ENCODE measurements at regions of chr20 and their contacts with region 1.

Region 1: DNA sequence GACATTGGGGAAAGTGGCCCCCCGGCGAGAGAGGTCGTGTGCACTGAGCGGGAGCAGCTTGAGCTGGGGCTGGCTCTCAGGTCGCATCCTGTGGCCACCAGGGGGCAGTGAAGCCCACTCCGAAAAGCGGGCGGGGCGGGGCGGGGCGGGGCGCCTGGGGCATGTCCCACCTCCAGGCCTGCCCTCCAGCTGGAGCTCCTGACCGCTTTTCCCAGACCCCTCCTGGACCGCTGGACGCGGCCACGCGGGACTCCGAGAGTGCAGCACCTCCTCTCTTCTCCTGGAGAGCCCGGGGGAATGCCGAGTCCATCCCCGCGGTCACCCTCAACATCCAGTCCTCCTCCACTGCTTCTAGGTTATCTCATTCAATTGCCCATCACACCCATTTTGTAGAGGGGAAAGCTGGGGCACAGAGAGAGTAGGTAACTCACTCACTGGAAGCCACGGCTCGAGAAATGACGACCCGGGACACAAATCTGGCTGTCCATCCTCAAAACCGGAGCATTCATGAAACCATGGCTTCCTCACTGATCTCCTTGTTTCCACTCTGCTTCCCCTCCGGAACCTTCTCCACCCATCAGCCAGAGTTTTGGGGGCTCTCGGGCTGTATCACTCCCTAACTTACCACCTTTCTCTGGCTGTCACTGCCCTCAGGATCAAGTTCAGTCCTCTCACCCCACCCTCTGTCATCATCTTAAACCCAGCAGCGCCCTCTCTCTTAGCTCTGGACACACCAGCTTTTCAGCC is 24.1 kb downstream of the COX4I2 start:
- DNase-seq: peak; percentile 89
- ATAC-seq: peak; percentile 75
- H3K4me3 Mint-ChIP-seq: peak overlapping the region; percentile 45
- H3K27ac Mint-ChIP-seq: peak overlapping the region; percentile 89
- H3K4me1 Mint-ChIP-seq: peaks cover 49% of the 10 kb centered on the region
- H3K27me3 Mint-ChIP-seq: no peaks in the 10 kb centered on the region

Region 2: DNA sequence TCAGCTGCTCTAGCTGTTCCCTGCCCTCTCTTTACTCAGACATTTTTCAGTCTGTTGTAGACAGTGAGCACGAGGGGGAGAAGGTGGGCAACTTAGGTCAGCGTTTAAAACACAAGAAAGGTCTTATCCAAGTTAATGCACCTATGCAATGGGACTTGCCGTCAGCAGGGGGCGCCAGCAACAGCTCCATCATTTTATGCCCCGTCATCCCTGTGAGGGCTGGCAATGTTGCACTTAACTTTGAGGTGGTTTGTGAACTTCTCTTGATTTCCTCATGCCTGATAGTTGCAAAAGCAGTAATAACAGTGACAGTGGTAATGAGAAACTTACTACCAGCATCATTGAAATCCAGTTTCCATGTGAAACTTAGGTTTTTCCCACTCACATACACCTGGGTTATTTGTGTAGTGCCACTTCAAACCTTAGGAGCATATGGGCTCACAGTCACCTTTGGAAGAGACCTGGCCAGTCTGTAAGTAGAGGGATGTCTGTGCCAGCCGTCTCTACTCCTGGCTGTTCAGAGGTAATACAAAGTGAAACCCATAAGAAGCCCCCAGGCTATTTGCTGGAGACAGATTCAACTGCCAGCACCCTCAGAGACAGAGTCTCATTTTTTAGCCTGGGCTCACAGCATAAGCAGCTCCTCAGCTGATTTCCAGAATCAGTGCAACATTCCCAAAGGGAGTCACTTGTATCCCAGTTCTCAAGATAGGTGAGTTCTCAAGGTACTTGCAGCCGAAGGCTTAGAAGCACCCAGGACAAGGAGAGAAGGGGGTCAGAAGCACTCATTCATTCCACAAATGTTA is 101.5 kb before region 1 on chr20:
- CTCF ChIA-PET with region 1: interaction called, 10 read pairs
- POLR2A ChIA-PET with region 1: no interaction called
- intact Hi-C with region 1: no loop called
- DNase-seq: peak; percentile 91
- ATAC-seq: peak; percentile 78
- H3K4me3 Mint-ChIP-seq: no peak overlapping the region
- H3K27ac Mint-ChIP-seq: peak overlapping the region; percentile 85
- H3K4me1 Mint-ChIP-seq: peaks cover 16% of the 10 kb centered on the region
- H3K27me3 Mint-ChIP-seq: no peaks in the 10 kb centered on the region

Region 3: GRCh38 chr20:31630187-31630790 is 31.5 kb before region 1 on chr20:
- CTCF ChIA-PET with region 1: interaction called, 10 read pairs
- POLR2A ChIA-PET with region 1: no interaction called
- intact Hi-C with region 1: loop called in 1 of 2 experiments (anchors 2 kb)
- DNase-seq: no peak
- ATAC-seq: peak; percentile 49
- H3K4me3 Mint-ChIP-seq: no peak overlapping the region
- H3K27ac Mint-ChIP-seq: no peak overlapping the region
- H3K4me1 Mint-ChIP-seq: no peaks in the 10 kb centered on the region
- H3K27me3 Mint-ChIP-seq: no peaks in the 10 kb centered on the region

Region 4: DNA sequence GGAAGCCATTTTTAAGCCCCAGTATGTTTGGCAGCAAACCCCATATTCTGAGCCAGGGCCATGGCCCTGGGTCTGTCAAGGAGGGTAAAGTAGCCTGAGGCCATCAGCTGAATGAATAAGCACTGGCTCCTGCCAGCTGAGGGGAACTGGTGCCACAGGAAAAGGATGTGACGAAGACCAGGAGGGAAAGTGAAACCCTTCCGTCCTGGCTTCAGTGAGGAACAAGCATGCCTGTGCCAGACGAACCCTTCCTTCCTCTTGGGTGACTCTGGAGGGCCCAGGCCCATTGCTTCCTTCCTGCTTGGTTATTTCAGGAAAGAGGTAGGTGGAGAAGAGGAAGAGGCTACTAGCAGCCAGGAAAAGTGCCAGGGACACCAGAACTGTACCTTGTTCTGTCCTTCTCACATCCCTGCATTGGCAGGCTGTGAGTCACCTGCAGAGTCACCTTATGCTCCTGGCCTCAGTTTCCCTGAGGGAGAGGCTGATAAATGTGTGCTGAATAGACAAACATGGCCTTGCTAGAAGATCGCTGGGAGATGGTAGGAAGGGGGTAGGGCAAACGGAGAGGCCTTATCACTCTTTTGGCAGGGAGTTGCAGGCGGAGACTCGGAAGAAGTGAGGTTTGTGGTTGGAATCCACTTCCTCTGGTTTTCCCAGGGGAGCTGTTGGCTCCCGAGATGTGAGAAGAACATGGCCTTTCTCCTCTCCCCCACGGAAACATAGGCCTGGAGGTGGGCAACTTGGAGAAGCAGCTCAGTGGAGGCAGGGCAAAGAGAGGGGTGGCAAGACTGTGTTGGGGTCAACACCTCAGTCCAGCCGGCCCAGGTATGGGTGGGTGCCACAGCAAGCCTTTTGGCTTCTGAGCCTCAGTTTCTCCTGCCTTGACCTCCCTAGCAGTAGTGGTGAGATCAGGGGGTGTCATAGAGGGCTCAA is 13.4 kb after region 1 on chr20:
- CTCF ChIA-PET with region 1: interaction called, 34 read pairs
- POLR2A ChIA-PET with region 1: interaction called, 7 read pairs
- intact Hi-C with region 1: no loop called
- DNase-seq: peak; percentile 81
- ATAC-seq: peak; percentile 72
- H3K4me3 Mint-ChIP-seq: peak overlapping the region; percentile 91
- H3K27ac Mint-ChIP-seq: peak overlapping the region; percentile 100
- H3K4me1 Mint-ChIP-seq: peaks cover 79% of the 10 kb centered on the region
- H3K27me3 Mint-ChIP-seq: no peaks in the 10 kb centered on the region

Region 5: DNA sequence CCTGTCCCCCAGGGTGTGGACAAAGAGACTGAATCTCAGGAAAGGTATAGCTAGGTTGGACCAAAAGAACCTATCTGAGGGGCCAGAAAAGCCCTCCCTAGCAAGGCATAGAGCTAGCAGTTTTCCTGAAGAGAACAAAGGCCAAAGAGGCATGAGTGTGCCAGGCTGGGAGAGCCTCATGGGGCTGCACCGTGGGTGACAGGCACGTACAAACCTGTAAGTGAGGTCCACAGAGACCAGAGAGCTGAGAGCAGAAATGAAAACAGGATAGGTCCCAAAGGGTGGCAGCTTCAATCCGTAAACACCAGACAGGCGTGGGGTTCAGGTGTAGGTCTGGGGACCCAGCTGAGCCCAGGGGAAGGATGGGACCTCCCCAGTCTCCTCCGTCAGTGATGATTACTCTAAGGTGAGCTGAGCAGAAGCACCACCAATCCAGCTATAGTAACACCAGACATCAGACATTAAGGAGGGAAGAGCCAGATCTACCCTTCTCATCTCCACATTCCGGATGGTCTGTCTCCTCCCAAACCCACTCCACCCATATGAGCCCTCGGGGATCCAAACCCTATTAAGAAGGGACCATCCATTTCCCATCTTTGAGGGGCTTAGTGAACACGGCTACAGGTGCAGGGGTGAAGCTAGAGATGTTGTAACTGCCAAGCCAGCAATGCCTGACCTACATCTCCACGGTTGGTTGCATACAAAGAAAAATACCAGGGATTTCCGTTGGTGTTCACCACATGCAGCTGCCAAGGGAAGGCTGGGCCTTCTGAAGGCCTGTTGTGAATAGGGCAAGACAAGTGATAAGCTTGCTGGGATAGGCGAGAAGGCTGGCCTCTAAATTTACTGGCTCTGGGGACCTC is 22.6 kb after region 1 on chr20:
- CTCF ChIA-PET with region 1: interaction called, 13 read pairs
- POLR2A ChIA-PET with region 1: interaction called, 3 read pairs
- intact Hi-C with region 1: no loop called
- DNase-seq: no peak
- ATAC-seq: peak; percentile 33
- H3K4me3 Mint-ChIP-seq: no peak overlapping the region
- H3K27ac Mint-ChIP-seq: peak overlapping the region; percentile 83
- H3K4me1 Mint-ChIP-seq: peaks cover 72% of the 10 kb centered on the region
- H3K27me3 Mint-ChIP-seq: no peaks in the 10 kb centered on the region

Region 6: DNA sequence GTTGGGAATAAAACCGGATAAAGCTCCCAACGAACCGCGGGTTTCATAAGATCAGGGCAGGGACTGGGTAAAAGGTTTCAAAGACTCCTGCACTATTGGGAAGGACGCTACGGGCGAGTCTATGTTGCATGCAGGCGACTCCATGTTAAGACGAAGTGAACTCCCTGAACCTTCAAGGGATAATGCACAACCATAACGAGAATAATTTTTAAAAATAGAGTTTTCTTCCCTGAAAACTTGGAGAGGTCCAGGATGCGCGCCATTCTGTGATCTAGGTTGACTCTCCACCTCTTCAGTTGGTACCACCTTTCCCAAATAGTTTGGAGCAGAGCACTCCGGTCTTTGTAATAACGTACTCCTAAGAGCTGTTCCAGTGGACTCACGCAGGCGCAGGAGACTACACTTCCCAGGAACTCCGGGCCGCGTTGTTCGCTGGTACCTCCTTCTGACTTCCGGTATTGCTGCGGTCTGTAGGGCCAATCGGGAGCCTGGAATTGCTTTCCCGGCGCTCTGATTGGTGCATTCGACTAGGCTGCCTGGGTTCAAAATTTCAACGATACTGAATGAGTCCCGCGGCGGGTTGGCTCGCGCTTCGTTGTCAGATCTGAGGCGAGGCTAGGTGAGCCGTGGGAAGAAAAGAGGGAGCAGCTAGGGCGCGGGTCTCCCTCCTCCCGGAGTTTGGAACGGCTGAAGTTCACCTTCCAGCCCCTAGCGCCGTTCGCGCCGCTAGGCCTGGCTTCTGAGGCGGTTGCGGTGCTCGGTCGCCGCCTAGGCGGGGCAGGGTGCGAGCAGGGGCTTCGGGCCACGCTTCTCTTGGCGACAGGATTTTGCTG is 77.1 kb after region 1 on chr20 and contains the start of gene TPX2:
- CTCF ChIA-PET with region 1: interaction called, 12 read pairs
- POLR2A ChIA-PET with region 1: interaction called, 5 read pairs
- intact Hi-C with region 1: loop called in 1 of 2 experiments (anchors 1 kb)
- DNase-seq: peak; percentile 92
- ATAC-seq: peak; percentile 97
- H3K4me3 Mint-ChIP-seq: no peak within 1 kb of the TSS
- H3K27ac Mint-ChIP-seq: no peak within 1 kb of the TSS
- H3K4me1 Mint-ChIP-seq: peaks cover 2% of the 10 kb centered on the region
- H3K27me3 Mint-ChIP-seq: no peaks in the 10 kb centered on the region
- total RNA-seq, gene TPX2: 137 to 179 TPM

Region 7: DNA sequence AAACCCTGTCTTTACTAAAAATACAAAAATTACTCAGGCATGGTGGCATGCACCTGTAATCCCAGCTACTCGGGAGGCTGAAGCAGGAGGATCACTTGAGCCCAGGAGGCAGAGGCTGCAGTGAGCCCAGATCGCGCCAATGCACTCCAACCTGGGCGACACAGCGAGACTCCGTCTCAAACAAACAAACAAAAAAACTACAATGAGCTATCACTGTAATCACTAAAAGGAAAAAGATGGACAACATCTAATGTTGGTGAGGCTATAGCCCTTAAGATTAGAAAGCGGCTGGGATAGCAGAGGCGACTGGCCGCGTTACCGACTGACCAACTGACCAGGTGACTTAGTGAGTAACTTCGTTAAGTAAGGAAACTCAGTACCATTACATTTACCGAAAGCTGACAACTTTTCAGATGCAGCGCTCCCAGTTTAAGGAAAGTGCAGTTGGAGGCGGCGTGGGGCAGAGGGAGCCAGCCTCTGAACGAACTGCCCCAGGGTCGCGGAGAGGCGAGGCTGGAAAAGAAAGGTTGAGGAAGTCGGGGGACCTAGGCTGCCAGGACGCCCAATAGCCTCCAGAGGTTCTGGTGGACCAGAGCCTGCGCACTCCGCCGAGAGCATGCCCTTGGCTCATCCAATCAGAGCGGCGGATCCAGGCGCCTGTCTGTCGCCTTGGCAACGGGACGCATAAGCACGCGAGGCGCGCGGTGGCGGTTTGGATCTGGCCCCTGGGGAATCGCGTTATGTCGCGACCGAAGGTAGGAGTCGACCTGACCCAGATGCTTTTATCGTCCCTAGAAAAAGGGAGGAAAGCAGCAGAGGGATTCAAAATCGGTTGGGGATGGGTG is 217.6 kb after region 1 on chr20:
- CTCF ChIA-PET with region 1: no interaction called
- POLR2A ChIA-PET with region 1: interaction called, 3 read pairs
- intact Hi-C with region 1: loop called in 1 of 2 experiments (anchors 1 kb)
- DNase-seq: peak; percentile 90
- ATAC-seq: peak; percentile 94
- H3K4me3 Mint-ChIP-seq: peak overlapping the region; percentile 84
- H3K27ac Mint-ChIP-seq: peak overlapping the region; percentile 45
- H3K4me1 Mint-ChIP-seq: peaks cover 8% of the 10 kb centered on the region
- H3K27me3 Mint-ChIP-seq: no peaks in the 10 kb centered on the region

Measured in activated CD4-positive, alpha-beta T cell treated with anti-CD3 and anti-CD28 coated beads for 36 hours (primary cell).